A673 (cell line): ENCODE measurements at regions of chr9 and their contacts with region 1.

Region 1: GRCh38 chr9:73038613-73039012 is 85.8 kb upstream of the ALDH1A1 start:
- DNase-seq: no peak
- H3K4me3 ChIP-seq: no peak overlapping the region
- H3K27ac ChIP-seq: no peak overlapping the region
- H3K4me1 ChIP-seq: peaks cover 17% of the 10 kb centered on the region
- H3K27me3 ChIP-seq: no peaks in the 10 kb centered on the region
- CTCF ChIP-seq: no peak

Region 2: DNA sequence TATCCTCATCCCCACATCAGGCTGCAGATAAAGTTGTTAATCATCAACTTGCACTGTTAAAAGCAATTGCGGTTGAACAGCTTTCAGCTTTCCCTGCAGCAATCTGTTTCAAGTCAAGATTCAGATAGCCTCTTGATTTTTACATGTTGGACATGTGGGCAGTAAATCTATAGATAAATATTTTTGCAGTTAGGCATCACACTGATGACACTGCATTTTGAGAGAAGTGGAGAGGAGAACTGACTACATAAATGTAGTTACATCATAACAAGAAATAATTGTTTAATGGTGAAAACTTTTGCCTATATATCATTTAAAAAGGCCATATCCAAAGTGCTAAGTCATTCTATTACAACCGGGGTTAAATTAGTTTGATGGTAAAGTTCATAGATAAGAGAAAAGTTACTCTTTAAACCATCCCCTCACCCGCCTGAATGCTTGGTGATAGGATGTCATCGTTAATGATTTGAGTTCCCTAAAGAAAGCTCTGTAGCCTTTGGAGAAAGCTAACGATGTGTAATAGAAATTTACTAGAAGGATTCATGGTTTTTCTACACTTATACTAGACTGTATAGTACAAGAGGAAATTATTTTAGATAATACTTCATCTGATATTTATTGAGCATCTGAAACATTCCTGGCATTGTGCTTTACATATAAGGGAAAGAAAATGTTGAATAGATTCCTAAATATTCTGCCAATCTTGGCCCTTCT is 54.9 kb before region 1 on chr9:
- CTCF ChIA-PET with region 1: no interaction called
- POLR2A ChIA-PET with region 1: no interaction called
- intact Hi-C with region 1: loop called (anchors 5 kb)
- DNase-seq: no peak
- H3K4me3 ChIP-seq: no peak overlapping the region
- H3K27ac ChIP-seq: no peak overlapping the region
- H3K4me1 ChIP-seq: peaks cover 33% of the 10 kb centered on the region
- H3K27me3 ChIP-seq: no peaks in the 10 kb centered on the region
- CTCF ChIP-seq: no peak